ENCODE measurements at regions of chr12 and their contacts with region 1.

Region 1: DNA sequence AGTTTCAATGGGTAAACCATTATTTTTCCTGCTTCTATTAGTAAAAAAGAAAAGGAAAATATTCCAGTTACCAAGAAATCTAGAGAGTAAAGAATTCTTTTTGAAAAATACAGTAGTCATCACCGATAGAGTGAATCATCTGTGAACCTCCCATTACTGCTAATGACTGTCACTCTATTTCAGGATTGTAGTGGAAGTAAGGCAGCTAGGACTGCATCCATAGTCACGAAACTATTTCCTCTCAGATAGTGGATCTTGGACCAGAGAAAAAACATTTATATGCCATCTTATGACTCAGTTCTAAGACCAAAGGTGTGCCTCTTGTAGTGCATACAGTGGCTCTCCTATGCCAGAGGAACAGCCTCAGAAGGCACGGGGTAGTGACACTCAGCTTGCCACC is 173.9 kb upstream of the PLEKHA5 start:
- DNase-seq: no peak
- H3K4me3 ChIP-seq: no peak overlapping the region
- H3K27ac ChIP-seq: no peak overlapping the region
- H3K4me1 ChIP-seq: peaks cover 6% of the 10 kb centered on the region
- H3K27me3 ChIP-seq: no peaks in the 10 kb centered on the region
- CTCF ChIP-seq: no peak

Region 2: DNA sequence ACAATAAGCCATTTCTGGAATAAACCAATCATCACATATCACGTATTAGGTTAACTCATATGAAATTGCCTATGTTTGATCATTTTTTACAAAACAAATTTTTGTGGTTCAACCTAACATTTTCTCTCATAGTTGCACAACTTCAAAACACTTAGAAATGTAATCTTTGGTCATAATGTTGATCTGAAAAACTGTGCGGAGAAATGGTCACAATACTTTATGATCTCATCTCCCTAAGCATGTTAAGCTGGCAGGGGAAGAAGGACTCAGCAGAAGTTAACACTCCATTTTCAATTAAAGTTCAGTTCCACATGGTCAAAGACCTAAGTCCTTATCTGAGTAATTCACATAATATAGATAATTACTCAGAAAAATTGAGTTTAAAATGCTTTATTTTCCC is 22.9 kb before region 1 on chr12:
- CTCF ChIA-PET with region 1: no interaction called
- POLR2A ChIA-PET with region 1: no interaction called
- intact Hi-C with region 1: no loop called
- DNase-seq: no peak
- H3K4me3 ChIP-seq: no peak overlapping the region
- H3K27ac ChIP-seq: no peak overlapping the region
- H3K4me1 ChIP-seq: no peaks in the 10 kb centered on the region
- H3K27me3 ChIP-seq: no peaks in the 10 kb centered on the region
- CTCF ChIP-seq: no peak

Region 3: DNA sequence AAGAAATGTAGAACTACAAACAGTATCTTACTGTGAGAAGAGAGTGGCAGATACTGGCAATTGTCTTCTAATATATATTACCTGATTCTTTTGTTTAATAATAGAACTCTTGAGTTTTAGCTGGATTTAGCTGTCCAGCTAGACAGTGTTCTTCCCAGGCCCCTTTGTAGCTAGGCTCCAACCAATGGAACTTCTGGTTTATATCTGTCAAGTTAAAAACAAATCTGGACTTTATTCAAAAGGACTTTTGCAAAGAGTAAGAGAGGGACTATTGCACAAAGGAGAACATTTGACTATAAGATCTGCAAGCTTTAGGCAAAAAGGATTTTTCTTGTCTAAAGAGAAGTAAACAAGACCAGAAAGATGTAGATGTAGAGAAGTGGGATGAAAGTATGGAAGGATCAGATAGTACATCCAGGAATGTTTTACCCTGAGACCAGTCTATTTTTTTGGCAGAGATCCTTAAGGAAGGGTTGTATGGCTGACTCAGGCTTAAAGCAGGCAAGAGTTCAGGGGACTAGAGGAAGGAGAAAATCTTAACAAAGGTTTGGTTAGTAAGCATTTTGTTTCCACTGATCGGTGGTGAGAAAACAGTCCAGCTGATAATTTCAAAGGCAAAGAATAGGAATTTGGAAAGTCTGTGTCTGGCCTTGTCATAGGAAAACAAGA is 62.8 kb after region 1 on chr12:
- CTCF ChIA-PET with region 1: no interaction called
- POLR2A ChIA-PET with region 1: no interaction called
- intact Hi-C with region 1: loop called (anchors 10 kb)
- DNase-seq: no peak
- H3K4me3 ChIP-seq: no peak overlapping the region
- H3K27ac ChIP-seq: no peak overlapping the region
- H3K4me1 ChIP-seq: no peaks in the 10 kb centered on the region
- H3K27me3 ChIP-seq: no peaks in the 10 kb centered on the region
- CTCF ChIP-seq: no peak

Region 4: GRCh38 chr12:19588951-19589350 is 633.4 kb after region 1 on chr12:
- CTCF ChIA-PET with region 1: no interaction called
- POLR2A ChIA-PET with region 1: no interaction called
- intact Hi-C with region 1: no loop called
- DNase-seq: no peak
- H3K4me3 ChIP-seq: no peak overlapping the region
- H3K27ac ChIP-seq: no peak overlapping the region
- H3K4me1 ChIP-seq: no peaks in the 10 kb centered on the region
- H3K27me3 ChIP-seq: no peaks in the 10 kb centered on the region
- CTCF ChIP-seq: no peak